AG04450 (cell line): ENCODE measurements at regions of chr3 and their contacts with region 1.

Region 1: DNA sequence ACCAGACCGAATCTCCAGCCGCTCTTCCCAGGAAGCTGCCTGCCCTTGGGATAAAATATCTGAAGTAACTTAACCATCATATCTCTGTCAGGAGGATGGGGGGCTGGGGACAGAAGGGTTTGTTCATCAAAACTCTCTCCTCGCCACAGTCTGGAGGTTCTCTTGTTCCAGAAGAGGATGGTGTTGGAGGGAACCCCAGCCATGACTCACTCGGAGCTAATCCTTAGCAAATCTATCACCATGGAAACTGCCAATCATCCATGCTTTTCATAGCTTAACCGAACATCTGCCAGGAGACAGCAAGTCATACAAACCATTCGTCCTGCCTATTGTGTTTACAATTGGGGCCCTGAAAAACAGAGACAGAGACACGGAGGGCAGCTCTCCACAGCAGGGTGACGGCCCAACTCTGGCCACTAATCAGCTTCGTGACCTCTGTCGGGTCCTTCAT is 73.7 kb upstream of the HEG1 start:
- DNase-seq: peak; percentile 96
- H3K4me3 ChIP-seq: no peak overlapping the region
- H3K27ac ChIP-seq: peak overlapping the region; percentile 95
- H3K27me3 ChIP-seq: no peaks in the 10 kb centered on the region
- CTCF ChIP-seq: no peak

Region 2: GRCh38 chr3:125054449-125055329 is 74.8 kb before region 1 on chr3:
- CTCF ChIA-PET with region 1: no interaction called
- POLR2A ChIA-PET with region 1: interaction called, 12 read pairs
- DNase-seq: no peak
- H3K4me3 ChIP-seq: peak overlapping the region; percentile 71
- H3K27ac ChIP-seq: peak overlapping the region; percentile 71
- H3K27me3 ChIP-seq: no peaks in the 10 kb centered on the region
- CTCF ChIP-seq: peak; percentile 35; the same call in 1 of the 2 replicates

Region 3: DNA sequence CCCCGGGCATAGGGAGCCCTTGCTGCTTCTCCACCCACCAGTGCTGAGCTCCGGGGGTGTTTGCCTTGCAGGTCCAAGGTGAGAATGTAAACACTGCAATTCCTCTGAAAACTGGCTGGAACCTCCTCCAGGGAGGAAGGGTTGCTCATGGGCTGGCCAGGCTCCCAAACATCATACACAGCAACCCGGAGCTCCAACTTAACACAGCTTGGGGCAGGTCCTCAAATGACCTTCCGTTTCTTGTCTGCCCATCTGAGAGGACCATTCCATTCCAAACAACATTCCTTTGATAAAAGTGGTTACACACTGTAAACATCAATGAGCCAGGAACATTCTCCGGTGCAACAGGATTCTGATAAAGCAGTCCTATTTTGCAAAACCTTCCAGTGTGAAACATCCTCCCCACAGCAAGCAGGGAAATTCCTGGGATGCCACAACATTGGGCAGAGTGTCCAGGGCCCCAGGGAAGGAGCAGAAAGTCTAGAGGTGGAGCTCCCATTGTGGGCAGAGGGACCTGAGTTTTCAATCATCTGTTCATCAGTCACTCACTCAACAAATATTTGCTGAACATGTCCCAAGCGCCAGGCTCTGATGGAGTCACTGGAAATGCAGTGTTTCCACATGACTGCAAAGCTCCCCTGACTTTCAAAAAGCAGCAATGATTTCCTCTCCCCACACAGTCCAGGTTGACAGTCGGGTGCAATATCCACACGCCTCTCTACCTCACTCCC is 66.5 kb before region 1 on chr3:
- CTCF ChIA-PET with region 1: no interaction called
- POLR2A ChIA-PET with region 1: interaction called, 18 read pairs
- DNase-seq: peak; percentile 96
- H3K4me3 ChIP-seq: no peak overlapping the region
- H3K27ac ChIP-seq: peak overlapping the region; percentile 94
- H3K27me3 ChIP-seq: no peaks in the 10 kb centered on the region
- CTCF ChIP-seq: no peak

Region 4: DNA sequence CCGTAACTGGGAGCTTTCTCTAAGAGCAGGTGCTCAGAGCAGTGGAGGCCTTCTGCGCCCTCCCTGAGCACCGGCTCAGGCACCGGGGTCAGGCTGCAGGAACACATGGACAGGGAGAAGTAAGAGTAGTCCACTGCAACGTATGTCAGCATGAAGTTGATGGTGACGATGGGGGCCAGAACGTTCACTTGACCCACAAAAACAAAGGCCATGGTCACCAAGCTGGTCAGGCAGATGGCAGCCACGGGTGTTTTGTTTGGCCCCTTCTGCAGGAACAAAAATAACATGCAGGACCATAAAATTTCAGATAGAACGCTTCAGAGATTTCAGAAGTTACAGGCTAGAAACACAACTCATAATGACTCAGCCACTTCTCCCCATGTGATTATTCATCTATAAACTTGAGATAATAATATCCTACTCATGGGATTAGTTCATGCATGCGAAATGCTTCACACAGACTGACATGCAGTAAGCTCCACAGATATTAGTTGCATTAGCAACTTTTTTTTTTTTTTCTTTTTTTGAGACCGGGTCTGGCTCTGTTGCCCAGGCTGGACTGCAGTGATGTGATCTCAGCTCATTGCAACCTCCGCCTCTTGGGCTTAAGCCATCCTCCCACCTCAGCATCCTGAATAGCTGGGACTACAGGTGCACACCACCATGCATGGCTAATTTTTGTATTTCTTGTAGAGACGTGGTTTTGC is 21.5 kb before region 1 on chr3:
- CTCF ChIA-PET with region 1: no interaction called
- POLR2A ChIA-PET with region 1: interaction called, 13 read pairs
- DNase-seq: peak; percentile 77
- H3K4me3 ChIP-seq: no peak overlapping the region
- H3K27ac ChIP-seq: peak overlapping the region; percentile 92
- H3K27me3 ChIP-seq: no peaks in the 10 kb centered on the region
- CTCF ChIP-seq: no peak

Region 5: GRCh38 chr3:125116311-125117080 is 13.0 kb before region 1 on chr3:
- CTCF ChIA-PET with region 1: interaction called, 4 read pairs
- POLR2A ChIA-PET with region 1: interaction called, 13 read pairs
- DNase-seq: no peak
- H3K4me3 ChIP-seq: no peak overlapping the region
- H3K27ac ChIP-seq: peak overlapping the region; percentile 1
- H3K27me3 ChIP-seq: no peaks in the 10 kb centered on the region
- CTCF ChIP-seq: no peak

Region 6: DNA sequence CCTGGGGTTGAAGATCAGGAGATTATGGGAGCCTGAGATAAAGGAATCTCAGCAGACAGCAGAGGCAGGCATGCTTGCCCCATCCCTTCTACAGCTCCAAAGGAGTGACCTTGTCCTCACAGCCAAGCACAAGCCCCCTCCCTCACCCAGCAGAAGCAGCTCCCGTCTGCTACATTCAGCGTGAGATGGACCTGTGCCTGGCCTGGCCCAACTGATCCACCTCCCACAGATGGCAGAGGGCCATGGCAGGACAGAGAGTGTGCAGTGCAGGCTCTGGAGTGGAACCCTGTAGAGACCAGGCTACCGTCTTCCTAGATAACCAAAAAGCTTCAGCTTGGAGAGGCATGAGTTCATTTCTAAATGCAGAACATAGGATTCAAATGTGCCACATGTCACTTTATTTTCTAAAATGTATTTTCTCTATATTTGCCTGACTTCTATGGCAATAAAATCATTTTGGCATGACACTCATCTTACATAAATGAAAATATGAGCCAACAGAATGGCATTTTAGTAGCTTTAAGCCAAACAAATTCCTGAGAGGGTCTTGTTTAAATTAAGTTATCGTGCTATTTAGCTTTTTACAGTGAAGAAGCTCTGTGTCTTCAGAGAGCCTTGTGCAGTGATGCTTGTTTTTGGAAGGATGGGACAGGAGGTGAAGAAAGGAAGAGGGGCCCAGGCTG is 39.3 kb after region 1 on chr3:
- CTCF ChIA-PET with region 1: no interaction called
- POLR2A ChIA-PET with region 1: no interaction called
- DNase-seq: no peak
- H3K4me3 ChIP-seq: no peak overlapping the region
- H3K27ac ChIP-seq: no peak overlapping the region
- H3K27me3 ChIP-seq: no peaks in the 10 kb centered on the region
- CTCF ChIP-seq: no peak